Activated CD4-positive, alpha-beta T cell treated with anti-CD3 and anti-CD28 coated beads, Interleukin-2, amount 10 ng/mL, durations not matched to agents 7 days and 5 days (primary cell): ENCODE measurements at regions of chr19 and their contacts with region 1.

Region 1: DNA sequence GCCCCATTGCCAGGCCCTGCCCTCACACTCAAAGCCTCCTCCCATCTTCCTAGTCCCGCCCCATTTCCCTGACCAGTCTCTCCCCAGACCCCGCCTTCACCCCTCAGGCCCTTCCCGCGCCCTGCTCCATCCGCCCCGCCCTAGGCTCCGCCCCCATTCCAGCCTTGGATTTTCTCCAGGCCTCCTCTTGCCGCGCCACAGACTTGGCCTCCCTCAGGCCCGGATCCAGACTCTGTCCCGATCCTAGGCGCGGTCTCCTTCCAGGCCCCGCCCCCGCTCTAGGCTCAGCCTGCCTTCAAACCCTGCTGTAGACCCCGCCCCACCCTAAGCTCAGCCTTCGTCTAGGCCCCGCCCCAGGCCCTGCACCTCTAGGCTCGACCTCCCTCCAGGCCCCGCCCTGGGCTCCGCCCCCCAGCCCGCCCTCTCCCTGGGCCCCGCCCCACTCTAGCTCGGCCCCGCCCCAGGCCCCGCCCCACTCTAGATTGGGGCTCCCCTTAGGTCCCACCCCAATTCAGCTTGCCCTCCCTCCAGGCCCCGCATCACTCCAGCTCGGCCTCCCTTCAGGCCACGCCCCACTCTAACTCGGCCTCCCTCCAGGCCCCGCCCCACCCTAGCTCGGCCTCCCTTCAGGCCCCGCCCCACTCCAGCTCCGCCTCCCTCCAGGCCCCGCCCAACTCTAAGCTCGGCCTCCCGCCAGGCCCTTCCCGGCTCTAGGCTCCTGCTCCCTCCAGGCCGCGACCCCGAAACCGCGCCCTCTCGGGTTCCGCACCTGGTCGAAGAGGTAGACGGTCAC is 18.5 kb downstream of the LMTK3 start:
- DNase-seq: peak; percentile 91
- H3K4me3 Mint-ChIP-seq: peak overlapping the region; percentile 67
- H3K27ac Mint-ChIP-seq: peak overlapping the region; percentile 82
- H3K4me1 Mint-ChIP-seq: peaks cover 46% of the 10 kb centered on the region
- H3K27me3 Mint-ChIP-seq: peaks cover 53% of the 10 kb centered on the region

Region 2: GRCh38 chr19:48480558-48481500 is 12.3 kb before region 1 on chr19:
- CTCF ChIA-PET with region 1: interaction called, 24 read pairs
- POLR2A ChIA-PET with region 1: no interaction called
- DNase-seq: peak; percentile 75
- H3K4me3 Mint-ChIP-seq: peak overlapping the region; percentile 67
- H3K27ac Mint-ChIP-seq: peak overlapping the region; percentile 91
- H3K4me1 Mint-ChIP-seq: peaks cover 27% of the 10 kb centered on the region
- H3K27me3 Mint-ChIP-seq: no peaks in the 10 kb centered on the region

Region 3: GRCh38 chr19:48510421-48511280 is 17.5 kb after region 1 on chr19:
- CTCF ChIA-PET with region 1: interaction called, 23 read pairs
- POLR2A ChIA-PET with region 1: no interaction called
- DNase-seq: peak; percentile 83
- H3K4me3 Mint-ChIP-seq: peak overlapping the region; percentile 73
- H3K27ac Mint-ChIP-seq: peak overlapping the region; percentile 66
- H3K4me1 Mint-ChIP-seq: peaks cover 23% of the 10 kb centered on the region
- H3K27me3 Mint-ChIP-seq: no peaks in the 10 kb centered on the region

Region 4: DNA sequence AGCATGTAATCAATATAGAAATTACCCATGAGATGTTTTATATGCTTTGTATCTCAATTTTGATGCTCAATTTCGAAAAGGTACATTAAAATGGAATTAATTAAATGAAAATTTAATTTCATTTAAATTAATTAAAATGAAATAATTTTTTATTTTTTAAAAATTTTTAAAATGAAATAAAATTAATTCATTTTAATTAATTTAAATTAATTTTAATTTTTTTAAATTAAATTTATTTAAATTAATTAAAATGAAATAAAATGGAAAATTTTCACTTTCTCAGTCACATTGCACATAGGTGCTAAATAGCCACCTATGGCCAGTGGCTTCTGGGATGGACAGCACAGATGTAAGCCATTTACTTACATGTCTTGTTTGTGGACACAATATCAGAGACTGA is 54.6 kb after region 1 on chr19:
- CTCF ChIA-PET with region 1: no interaction called
- POLR2A ChIA-PET with region 1: no interaction called
- DNase-seq: no peak
- H3K4me3 Mint-ChIP-seq: no peak overlapping the region
- H3K27ac Mint-ChIP-seq: no peak overlapping the region
- H3K4me1 Mint-ChIP-seq: no peaks in the 10 kb centered on the region
- H3K27me3 Mint-ChIP-seq: no peaks in the 10 kb centered on the region

Region 5: GRCh38 chr19:48588670-48589399 is 95.7 kb after region 1 on chr19:
- CTCF ChIA-PET with region 1: interaction called, 19 read pairs
- POLR2A ChIA-PET with region 1: no interaction called
- DNase-seq: peak; percentile 90
- H3K4me3 Mint-ChIP-seq: peak overlapping the region; percentile 78
- H3K27ac Mint-ChIP-seq: peak overlapping the region; percentile 88
- H3K4me1 Mint-ChIP-seq: peaks cover 23% of the 10 kb centered on the region
- H3K27me3 Mint-ChIP-seq: no peaks in the 10 kb centered on the region

Region 6: GRCh38 chr19:48608798-48609263 is 115.7 kb after region 1 on chr19:
- CTCF ChIA-PET with region 1: interaction called, 13 read pairs
- POLR2A ChIA-PET with region 1: no interaction called
- DNase-seq: peak; percentile 61
- H3K4me3 Mint-ChIP-seq: no peak overlapping the region
- H3K27ac Mint-ChIP-seq: peak overlapping the region; percentile 79
- H3K4me1 Mint-ChIP-seq: peaks cover 4% of the 10 kb centered on the region
- H3K27me3 Mint-ChIP-seq: no peaks in the 10 kb centered on the region